ENCODE measurements at regions of chr22 and their contacts with region 1.

Region 1: GRCh38 chr22:39900306-39901227 is at the start of gene GRAP2:
- DNase-seq: no peak
- ATAC-seq: peak; percentile 57
- H3K4me3 Mint-ChIP-seq: peak within 1 kb of the TSS; percentile 75
- H3K27ac Mint-ChIP-seq: peak within 1 kb of the TSS; percentile 90
- H3K4me1 Mint-ChIP-seq: peaks cover 54% of the 10 kb centered on the region
- H3K27me3 Mint-ChIP-seq: no peaks in the 10 kb centered on the region
- CTCF ChIP-seq: no peak
- total RNA-seq, gene GRAP2: 4.2 and 4.3 TPM in 2 replicates

Region 2: GRCh38 chr22:39825661-39826102 is 74.9 kb before region 1 on chr22:
- CTCF ChIA-PET with region 1: no interaction called
- POLR2A ChIA-PET with region 1: interaction called, 5 read pairs
- intact Hi-C with region 1: loop called (anchors 1 kb)
- DNase-seq: peak; percentile 20
- ATAC-seq: peak; percentile 95
- H3K4me3 Mint-ChIP-seq: peak overlapping the region; percentile 75
- H3K27ac Mint-ChIP-seq: peak overlapping the region; percentile 87
- H3K4me1 Mint-ChIP-seq: peaks cover 48% of the 10 kb centered on the region
- H3K27me3 Mint-ChIP-seq: no peaks in the 10 kb centered on the region
- CTCF ChIP-seq: no peak

Region 3: DNA sequence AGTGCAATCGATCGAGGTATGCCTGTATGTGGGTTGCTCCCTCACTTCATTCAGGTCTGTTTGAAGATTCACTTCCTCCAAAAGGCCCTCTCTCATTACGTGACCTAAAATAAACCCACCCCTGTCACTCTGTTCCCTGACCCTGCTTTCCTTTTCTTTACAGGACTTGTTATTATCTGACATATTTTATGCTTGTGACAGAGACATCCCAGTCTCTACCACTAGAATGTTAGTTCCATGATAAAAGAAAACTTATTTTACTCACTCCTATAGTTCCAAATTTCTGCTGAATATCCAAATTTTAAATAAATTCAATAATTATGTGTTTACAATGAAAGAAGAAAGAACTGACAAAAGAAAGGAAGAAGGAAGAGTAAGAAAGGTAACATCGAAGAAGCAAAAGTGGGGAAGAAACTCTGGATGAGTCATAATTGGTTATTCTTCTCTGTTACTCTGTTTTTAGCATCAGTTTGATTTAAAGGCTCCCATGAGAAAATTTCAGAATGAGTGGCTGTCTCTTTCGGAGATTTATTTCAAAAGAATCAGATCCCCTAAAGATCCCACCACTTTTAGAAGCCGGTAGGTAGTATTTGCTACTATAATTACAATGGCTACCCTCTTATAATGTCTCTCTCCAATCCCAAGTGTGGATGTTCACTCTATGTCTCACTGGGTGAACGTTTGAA is 40.5 kb before region 1 on chr22:
- CTCF ChIA-PET with region 1: no interaction called
- POLR2A ChIA-PET with region 1: no interaction called
- intact Hi-C with region 1: loop called (anchors 5 kb)
- DNase-seq: no peak
- ATAC-seq: peak; percentile 65
- H3K4me3 Mint-ChIP-seq: peak overlapping the region; percentile 42
- H3K27ac Mint-ChIP-seq: peak overlapping the region; percentile 48
- H3K4me1 Mint-ChIP-seq: peaks cover 29% of the 10 kb centered on the region
- H3K27me3 Mint-ChIP-seq: no peaks in the 10 kb centered on the region
- CTCF ChIP-seq: no peak

Region 4: GRCh38 chr22:39917776-39918495 is 17.4 kb after region 1 on chr22:
- CTCF ChIA-PET with region 1: no interaction called
- POLR2A ChIA-PET with region 1: interaction called, 8 read pairs
- intact Hi-C with region 1: loop called (anchors 2 kb)
- DNase-seq: no peak
- ATAC-seq: no peak
- H3K4me3 Mint-ChIP-seq: no peak overlapping the region
- H3K27ac Mint-ChIP-seq: no peak overlapping the region
- H3K4me1 Mint-ChIP-seq: peaks cover 38% of the 10 kb centered on the region
- H3K27me3 Mint-ChIP-seq: no peaks in the 10 kb centered on the region
- CTCF ChIP-seq: no peak

Region 5: DNA sequence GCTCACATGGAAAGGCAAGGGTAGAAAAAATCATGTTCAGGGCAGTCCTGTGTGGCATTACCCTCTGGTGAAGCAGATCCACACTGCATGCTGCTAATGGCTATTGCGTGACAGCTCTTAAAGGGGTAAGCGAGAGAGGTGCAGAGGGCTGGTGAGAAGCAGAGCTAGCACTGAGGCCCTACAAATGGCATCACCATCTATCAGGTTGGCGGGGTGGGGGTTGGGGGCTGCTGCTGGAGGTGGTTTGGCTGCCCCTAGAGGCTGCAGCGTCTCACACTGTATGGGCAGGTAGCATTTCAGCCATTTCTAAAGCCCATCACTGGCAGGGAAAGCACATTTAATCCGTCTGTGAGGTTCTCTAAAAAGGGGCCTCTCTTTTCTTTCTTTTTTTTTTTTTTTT is 42.8 kb after region 1 on chr22:
- CTCF ChIA-PET with region 1: interaction called, 3 read pairs
- POLR2A ChIA-PET with region 1: no interaction called
- intact Hi-C with region 1: loop called (anchors 5 kb)
- DNase-seq: no peak
- ATAC-seq: no peak
- H3K4me3 Mint-ChIP-seq: no peak overlapping the region
- H3K27ac Mint-ChIP-seq: no peak overlapping the region
- H3K4me1 Mint-ChIP-seq: peaks cover 71% of the 10 kb centered on the region
- H3K27me3 Mint-ChIP-seq: no peaks in the 10 kb centered on the region
- CTCF ChIP-seq: no peak

Measured in activated B cell treated with CpG ODN at 0.5 μM for 24 hours (primary cell).